MCF 10A (cell line): ENCODE measurements at regions of chr12 and their contacts with region 1.

Region 1: GRCh38 chr12:85951823-85952222 is 77.7 kb downstream of the NTS start:
- DNase-seq: peak; percentile 24
- H3K4me3 Mint-ChIP-seq: no peak overlapping the region
- H3K27ac Mint-ChIP-seq: no peak overlapping the region
- H3K4me1 Mint-ChIP-seq: no peaks in the 10 kb centered on the region
- H3K27me3 Mint-ChIP-seq: no peaks in the 10 kb centered on the region
- CTCF ChIP-seq: peak; percentile 55

Region 2: DNA sequence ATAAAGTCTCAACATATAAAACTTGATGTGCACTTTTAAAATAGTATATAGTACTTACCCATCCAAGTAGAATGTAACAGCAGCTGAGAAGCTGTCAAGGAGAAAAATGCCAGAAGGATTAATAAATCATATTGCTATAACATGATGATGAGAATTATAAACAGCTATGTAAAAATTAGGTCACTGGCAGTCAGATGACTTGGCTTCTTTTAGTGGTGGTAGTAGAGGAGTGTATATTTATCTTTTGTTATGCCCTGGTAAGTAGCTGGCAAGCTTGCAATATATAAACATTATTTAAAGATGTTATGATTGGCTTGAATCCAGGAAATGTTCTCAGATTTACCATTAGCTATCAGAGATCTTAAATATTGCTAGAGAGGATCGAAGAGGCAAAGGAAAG is 775.3 kb after region 1 on chr12:
- CTCF ChIA-PET with region 1: interaction called, 4 read pairs
- POLR2A ChIA-PET with region 1: no interaction called
- intact Hi-C with region 1: loop called (anchors 10 kb)
- DNase-seq: peak; percentile 72
- H3K4me3 Mint-ChIP-seq: peak overlapping the region; percentile 16
- H3K27ac Mint-ChIP-seq: no peak overlapping the region
- H3K4me1 Mint-ChIP-seq: peaks cover 22% of the 10 kb centered on the region
- H3K27me3 Mint-ChIP-seq: no peaks in the 10 kb centered on the region
- CTCF ChIP-seq: no peak